ENCODE measurements at regions of chr19 and their contacts with region 1.

Region 1: DNA sequence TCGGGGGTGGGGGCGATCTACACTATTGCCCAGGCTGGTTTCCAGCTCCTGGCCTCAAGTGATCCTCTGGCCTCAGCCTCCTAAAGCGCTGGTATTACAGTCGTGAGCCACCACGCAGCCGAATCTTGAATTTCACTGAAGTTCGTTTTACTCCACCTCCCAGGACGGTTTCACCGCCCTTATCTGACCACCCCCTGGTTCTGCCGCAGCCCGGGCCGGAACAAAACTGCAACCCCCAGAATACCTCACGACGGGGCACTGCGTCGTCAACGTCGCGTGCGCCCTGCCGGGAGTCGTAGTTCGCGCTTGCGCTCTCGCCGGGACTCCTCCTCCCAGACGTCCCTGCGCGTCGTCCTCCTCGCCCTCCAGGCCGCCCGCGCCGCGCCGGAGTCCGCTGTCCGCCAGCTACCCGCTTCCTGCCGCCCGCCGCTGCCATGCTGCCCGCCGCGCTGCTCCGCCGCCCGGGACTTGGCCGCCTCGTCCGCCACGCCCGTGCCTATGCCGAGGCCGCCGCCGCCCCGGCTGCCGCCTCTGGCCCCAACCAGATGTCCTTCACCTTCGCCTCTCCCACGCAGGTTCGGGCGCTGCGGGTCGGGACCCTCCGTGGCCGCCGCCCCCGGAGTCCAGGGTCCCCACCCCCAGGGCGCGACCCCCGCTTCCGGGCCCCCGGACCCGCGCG is at the start of gene ATP5F1D:
- DNase-seq: peak; percentile 88
- ATAC-seq: peak; percentile 26
- H3K4me3 ChIP-seq: peak within 1 kb of the TSS; percentile 80 to 93 (median 90)
- H3K27ac ChIP-seq: peak within 1 kb of the TSS; percentile 96
- H3K4me1 ChIP-seq: peaks cover 67% of the 10 kb centered on the region
- H3K27me3 ChIP-seq: no peaks in the 10 kb centered on the region
- CTCF ChIP-seq: peak; percentile 33; the same call in 1 of the 2 replicates
- EP300 ChIP-seq: no peak
- POLR2A ChIP-seq: peak in 1 of 2 experiments; percentile 46; a peak in 1 of 4 replicates
- RAD21 ChIP-seq: no peak; the same call in 1 of the 2 replicates
- total RNA-seq, gene ATP5F1D: 78.7 and 88.0 TPM in 2 replicates

Region 2: DNA sequence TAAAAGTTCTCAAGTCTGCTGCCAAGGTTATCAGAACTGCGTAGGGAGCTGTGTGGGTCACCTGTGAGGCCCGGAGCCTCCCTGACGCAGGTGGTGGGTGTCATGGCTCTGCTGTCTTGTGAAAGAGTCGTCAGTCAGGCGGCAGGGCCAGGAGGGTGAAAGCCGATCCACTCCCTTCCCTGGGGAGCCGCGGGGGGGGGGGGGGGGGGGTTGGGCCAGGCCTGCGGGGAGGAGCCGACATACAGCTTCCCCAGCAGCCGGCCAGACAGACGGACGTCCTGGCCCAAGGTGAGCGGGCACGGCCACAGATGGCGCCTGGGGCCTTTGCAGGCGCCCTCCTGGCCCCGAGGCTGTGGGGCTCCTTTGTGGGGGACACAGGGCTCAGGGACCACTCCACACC is 79.8 kb before region 1 on chr19:
- CTCF ChIA-PET with region 1: no interaction called
- POLR2A ChIA-PET with region 1: no interaction called
- in situ Hi-C with region 1: no loop called
- intact Hi-C with region 1: no loop called
- DNase-seq: no peak
- ATAC-seq: no peak
- H3K4me3 ChIP-seq: no peak overlapping the region
- H3K27ac ChIP-seq: no peak overlapping the region
- H3K4me1 ChIP-seq: peaks cover 4% of the 10 kb centered on the region; the same call in 1 of the 2 replicates
- H3K27me3 ChIP-seq: no peaks in the 10 kb centered on the region
- CTCF ChIP-seq: no peak
- EP300 ChIP-seq: no peak
- POLR2A ChIP-seq: no peak
- RAD21 ChIP-seq: no peak

Region 3: GRCh38 chr19:1221141-1221903 is 20.2 kb before region 1 on chr19:
- CTCF ChIA-PET with region 1: interaction called, 17 read pairs
- POLR2A ChIA-PET with region 1: no interaction called
- in situ Hi-C with region 1: no loop called
- intact Hi-C with region 1: no loop called
- DNase-seq: peak; percentile 38
- ATAC-seq: peak; percentile 54
- H3K4me3 ChIP-seq: no peak overlapping the region
- H3K27ac ChIP-seq: no peak overlapping the region
- H3K4me1 ChIP-seq: peaks cover 28% of the 10 kb centered on the region
- H3K27me3 ChIP-seq: no peaks in the 10 kb centered on the region
- CTCF ChIP-seq: peak; percentile 89
- EP300 ChIP-seq: no peak
- POLR2A ChIP-seq: no peak
- RAD21 ChIP-seq: peak; percentile 83

Region 4: DNA sequence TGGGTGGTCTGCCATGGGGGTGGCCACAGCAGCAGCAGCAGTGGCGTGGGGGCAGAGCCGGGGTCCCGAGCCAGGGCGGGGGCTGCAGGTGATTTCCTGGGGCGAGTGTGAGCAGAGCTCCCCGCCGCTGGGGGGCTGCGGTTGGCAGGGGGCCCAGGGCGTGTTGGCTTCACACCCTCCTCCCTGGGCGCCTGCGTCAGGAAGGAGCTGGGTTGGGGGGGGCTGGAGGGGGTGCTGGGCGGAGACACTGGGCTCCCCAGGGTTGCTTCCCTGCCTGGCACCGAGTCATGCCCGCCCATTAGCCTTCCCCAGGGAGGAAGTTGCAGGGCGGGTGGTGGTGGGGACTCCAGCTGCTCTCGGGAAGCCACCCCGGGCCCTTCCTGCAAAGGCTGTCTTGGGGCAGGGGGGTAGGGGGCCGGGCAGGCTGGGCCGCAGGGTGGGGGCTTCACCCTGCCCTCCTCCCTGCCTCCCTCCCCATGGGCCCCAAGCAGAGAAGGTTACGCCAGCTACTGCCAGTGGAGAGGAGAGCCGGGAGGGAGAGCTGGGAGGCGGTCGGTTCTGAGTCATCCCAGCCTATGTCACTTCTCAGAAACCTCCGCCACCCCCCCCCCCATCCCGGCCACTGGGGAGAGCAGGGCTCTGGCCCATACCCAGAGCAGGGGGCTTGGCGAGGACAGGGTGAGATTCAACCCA is 11.4 kb after region 1 on chr19:
- CTCF ChIA-PET with region 1: no interaction called
- POLR2A ChIA-PET with region 1: interaction called, 464 read pairs
- in situ Hi-C with region 1: no loop called
- intact Hi-C with region 1: no loop called
- DNase-seq: peak; percentile 82
- ATAC-seq: peak; percentile 26
- H3K4me3 ChIP-seq: peak overlapping the region; percentile 86 to 90 (median 88)
- H3K27ac ChIP-seq: peak overlapping the region; percentile 94
- H3K4me1 ChIP-seq: peaks cover 49% of the 10 kb centered on the region
- H3K27me3 ChIP-seq: no peaks in the 10 kb centered on the region; a peak in 1 of 5 replicates
- CTCF ChIP-seq: no peak
- EP300 ChIP-seq: no peak
- POLR2A ChIP-seq: no peak
- RAD21 ChIP-seq: no peak

Region 5: DNA sequence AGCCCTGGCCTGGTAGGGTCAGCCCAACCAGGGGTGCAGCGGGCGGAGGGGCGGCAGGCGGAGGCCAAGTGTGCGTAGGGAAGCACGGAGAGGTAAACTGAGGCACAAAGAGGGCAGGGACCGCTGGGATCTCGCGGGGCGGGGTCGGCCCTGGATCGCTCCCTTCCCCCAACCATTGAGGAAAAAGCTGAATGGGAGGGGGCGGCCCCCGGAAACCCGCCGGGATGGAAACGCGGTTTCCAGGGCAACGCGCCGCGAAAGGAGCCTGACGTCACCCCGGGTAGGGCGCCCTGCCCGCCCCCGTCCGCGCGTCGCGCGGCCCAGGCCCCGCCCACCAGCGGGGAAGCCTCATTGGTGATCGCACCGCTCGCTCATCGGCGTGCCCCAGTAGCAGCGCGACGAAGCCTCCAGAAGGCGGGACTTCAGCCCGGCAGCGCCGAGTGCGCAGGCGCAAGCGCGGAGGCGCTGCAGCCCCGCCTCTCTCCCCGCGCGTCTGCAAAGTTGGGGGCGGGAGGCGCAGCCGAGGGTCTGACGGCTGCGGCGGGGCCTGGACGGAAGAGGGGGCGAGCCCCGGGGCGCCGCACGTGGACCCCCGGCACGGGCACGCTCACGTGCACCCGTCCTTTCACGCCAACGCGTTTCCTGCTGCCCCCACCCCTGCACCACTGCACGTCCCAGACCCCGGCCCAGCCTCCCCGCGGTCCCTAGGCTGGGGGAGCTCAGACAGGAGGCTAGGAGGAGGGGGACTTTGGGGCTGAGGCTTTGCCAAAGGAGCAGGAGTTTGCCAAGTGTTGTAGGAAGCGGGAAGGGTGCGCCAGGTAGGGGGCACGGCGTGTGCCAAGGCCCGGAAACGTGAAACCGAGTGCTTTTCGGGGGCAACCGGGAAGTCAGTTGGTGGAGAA is 19.3 kb after region 1 on chr19:
- CTCF ChIA-PET with region 1: interaction called, 60 read pairs
- POLR2A ChIA-PET with region 1: interaction called, 464 read pairs
- in situ Hi-C with region 1: no loop called
- intact Hi-C with region 1: loop called (anchors 1 kb)
- DNase-seq: peak; percentile 88
- ATAC-seq: peak; percentile 59
- H3K4me3 ChIP-seq: peak overlapping the region; percentile 71 to 81 (median 80)
- H3K27ac ChIP-seq: peak overlapping the region; percentile 85
- H3K4me1 ChIP-seq: peaks cover 82% of the 10 kb centered on the region
- H3K27me3 ChIP-seq: no peaks in the 10 kb centered on the region
- CTCF ChIP-seq: no peak
- EP300 ChIP-seq: 0 out of 4 replicates have a peak, but pooled peaks of 1 of the 2 experiments have one; percentile 24
- POLR2A ChIP-seq: no peak
- RAD21 ChIP-seq: no peak

Region 6: DNA sequence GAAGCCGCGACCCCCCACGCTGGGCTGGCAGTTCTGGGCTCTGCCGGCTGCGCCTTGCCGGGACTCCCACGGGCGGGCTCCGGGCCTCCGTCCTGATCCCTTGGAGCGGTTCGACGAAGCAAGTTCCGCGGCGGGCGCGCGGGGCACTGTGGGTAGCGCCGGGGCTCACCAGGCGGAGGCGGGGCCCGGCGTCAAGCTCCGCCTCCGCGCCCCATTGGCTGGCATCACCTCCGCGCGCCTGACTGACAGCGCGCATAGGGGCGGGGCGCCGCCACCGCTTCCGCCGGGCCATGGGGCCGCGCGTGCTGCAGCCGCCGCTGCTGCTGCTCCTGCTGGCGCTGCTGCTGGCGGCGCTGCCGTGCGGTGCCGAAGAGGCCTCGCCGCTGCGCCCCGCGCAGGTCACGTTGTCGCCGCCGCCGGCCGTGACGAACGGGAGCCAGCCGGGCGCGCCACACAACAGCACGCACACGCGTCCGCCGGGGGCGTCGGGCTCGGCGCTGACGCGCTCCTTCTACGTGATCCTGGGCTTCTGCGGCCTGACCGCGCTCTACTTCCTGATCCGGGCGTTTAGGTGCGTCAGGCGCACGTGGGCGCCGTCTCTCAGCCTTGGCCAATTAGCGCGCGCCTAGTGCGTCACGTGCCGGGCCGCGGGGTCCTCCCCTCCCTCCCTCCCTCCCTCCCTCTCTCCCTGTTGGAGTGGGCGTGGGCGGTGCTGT is 33.9 kb after region 1 on chr19 and contains the start of gene FAM174C:
- CTCF ChIA-PET with region 1: interaction called, 6 read pairs
- POLR2A ChIA-PET with region 1: interaction called, 41 read pairs
- in situ Hi-C with region 1: loop called (anchors 5 kb)
- intact Hi-C with region 1: no loop called
- DNase-seq: peak; percentile 91
- ATAC-seq: peak; percentile 69
- H3K4me3 ChIP-seq: peak within 1 kb of the TSS; percentile 57 to 85 (median 73)
- H3K27ac ChIP-seq: peak within 1 kb of the TSS; percentile 100
- H3K4me1 ChIP-seq: peaks cover 58% of the 10 kb centered on the region
- H3K27me3 ChIP-seq: no peaks in the 10 kb centered on the region
- CTCF ChIP-seq: no peak; the same call in 1 of the 2 replicates
- EP300 ChIP-seq: 0 out of 4 replicates have a peak, but pooled peaks of 1 of the 2 experiments have one; percentile 16
- POLR2A ChIP-seq: peak in 1 of 2 experiments; percentile 89; a peak in 2 of 4 replicates
- RAD21 ChIP-seq: peak; percentile 77; the same call in 1 of the 2 replicates
- total RNA-seq, gene FAM174C: 21.9 and 31.3 TPM in 2 replicates

Region 7: GRCh38 chr19:1285737-1286360 is 44.3 kb after region 1 on chr19 and contains the start of gene EFNA2:
- CTCF ChIA-PET with region 1: no interaction called
- POLR2A ChIA-PET with region 1: interaction called, 14 read pairs
- in situ Hi-C with region 1: no loop called
- intact Hi-C with region 1: no loop called
- DNase-seq: no peak
- ATAC-seq: no peak
- H3K4me3 ChIP-seq: peak within 1 kb of the TSS; percentile 75 to 89 (median 82)
- H3K27ac ChIP-seq: peak within 1 kb of the TSS; percentile 75
- H3K4me1 ChIP-seq: peaks cover 67% of the 10 kb centered on the region
- H3K27me3 ChIP-seq: no peaks in the 10 kb centered on the region; a peak in 1 of 5 replicates
- CTCF ChIP-seq: no peak
- EP300 ChIP-seq: no peak
- POLR2A ChIP-seq: no peak
- RAD21 ChIP-seq: no peak
- total RNA-seq, gene EFNA2: 4.3 and 9.9 TPM in 2 replicates

Measured in HepG2 (cell line).